ENCODE measurements at regions of chr16 and their contacts with region 1.

Region 1: GRCh38 chr16:89641458-89642119 is 15.9 kb downstream of the CHMP1A start:
- DNase-seq: no peak
- ATAC-seq: no peak
- H3K4me3 Mint-ChIP-seq: peak overlapping the region; percentile 71
- H3K27ac Mint-ChIP-seq: no peak overlapping the region
- H3K4me1 Mint-ChIP-seq: peaks cover 8% of the 10 kb centered on the region
- H3K27me3 Mint-ChIP-seq: no peaks in the 10 kb centered on the region
- CTCF ChIP-seq: no peak

Region 2: GRCh38 chr16:89574681-89575246 is 66.8 kb before region 1 on chr16:
- CTCF ChIA-PET with region 1: no interaction called
- POLR2A ChIA-PET with region 1: no interaction called
- intact Hi-C with region 1: loop called (anchors 2 kb)
- DNase-seq: peak; percentile 49
- ATAC-seq: peak; percentile 57
- H3K4me3 Mint-ChIP-seq: peak overlapping the region; percentile 74
- H3K27ac Mint-ChIP-seq: no peak overlapping the region
- H3K4me1 Mint-ChIP-seq: peaks cover 22% of the 10 kb centered on the region
- H3K27me3 Mint-ChIP-seq: peaks cover 10% of the 10 kb centered on the region
- CTCF ChIP-seq: no peak

Region 3: DNA sequence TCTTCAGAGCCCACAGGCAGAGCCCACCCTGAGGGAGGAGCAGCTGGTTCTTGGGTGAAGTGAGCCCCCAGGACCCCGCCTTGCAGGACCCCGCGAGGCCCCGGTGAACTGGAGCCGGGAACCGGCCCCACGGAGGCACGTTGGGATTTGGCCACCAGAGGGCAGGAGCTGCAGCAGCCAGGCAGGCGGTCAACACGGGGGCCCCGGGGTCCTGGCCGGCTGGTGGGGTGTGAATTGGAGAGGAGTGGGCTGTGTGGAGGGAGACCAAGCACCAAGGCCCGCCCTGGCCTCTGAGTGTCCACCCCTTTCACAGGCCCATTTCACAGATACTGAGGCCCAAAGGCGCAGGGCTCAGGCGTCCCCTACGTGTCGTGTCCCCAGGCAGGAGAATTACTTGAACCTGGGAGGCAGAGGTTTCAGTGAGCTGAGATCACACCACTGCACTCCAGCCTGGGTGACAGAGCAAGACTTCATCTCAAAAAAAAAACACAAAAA is 25.9 kb before region 1 on chr16:
- CTCF ChIA-PET with region 1: interaction called, 3 read pairs
- POLR2A ChIA-PET with region 1: no interaction called
- intact Hi-C with region 1: loop called (anchors 1 kb)
- DNase-seq: peak; percentile 52
- ATAC-seq: no peak
- H3K4me3 Mint-ChIP-seq: no peak overlapping the region
- H3K27ac Mint-ChIP-seq: no peak overlapping the region
- H3K4me1 Mint-ChIP-seq: peaks cover 12% of the 10 kb centered on the region
- H3K27me3 Mint-ChIP-seq: peaks cover 3% of the 10 kb centered on the region
- CTCF ChIP-seq: no peak